Caco-2 (cell line): ENCODE measurements at regions of chr13 and their contacts with region 1.

Region 1: DNA sequence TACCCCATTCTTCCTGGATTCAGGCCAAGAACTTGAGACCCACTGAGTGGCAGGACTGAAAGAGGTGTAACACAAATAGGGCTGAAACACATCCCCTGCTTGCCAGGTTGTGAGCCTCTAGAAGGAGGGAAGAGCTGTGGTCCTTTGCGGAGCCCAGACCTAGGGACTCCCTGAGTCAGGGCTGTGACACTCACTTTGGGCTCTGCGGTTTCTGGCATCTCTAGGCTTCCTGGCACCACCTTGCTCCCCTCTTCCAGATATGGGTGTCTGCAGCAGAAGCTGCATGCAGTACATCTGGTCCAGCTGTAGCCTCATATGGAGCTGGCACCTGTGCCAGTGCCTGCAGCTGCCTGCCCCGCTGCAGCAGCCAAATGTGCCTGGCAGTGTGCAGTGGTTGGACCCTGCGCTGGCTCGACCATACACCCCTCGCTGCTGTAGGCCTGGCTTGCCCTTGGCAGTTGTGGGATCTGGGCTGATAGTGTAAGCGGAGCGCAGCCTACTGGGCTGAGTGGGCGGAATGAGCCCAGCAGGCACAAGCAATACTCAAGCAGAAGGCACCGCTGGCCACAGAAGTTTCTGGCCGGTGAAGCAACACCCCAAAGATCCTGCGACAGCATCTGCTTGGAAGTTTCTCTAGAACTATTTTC is 290.4 kb downstream of the SLITRK6 start:
- DNase-seq: peak in 1 of 2 experiments; percentile 22
- H3K4me3 ChIP-seq: no peak overlapping the region
- H3K4me3 Mint-ChIP-seq: no peak overlapping the region
- H3K27ac Mint-ChIP-seq: peak overlapping the region; percentile 66
- H3K4me1 ChIP-seq: peaks cover 50% of the 10 kb centered on the region
- H3K4me1 Mint-ChIP-seq: peaks cover 31% of the 10 kb centered on the region
- H3K27me3 ChIP-seq: no peaks in the 10 kb centered on the region
- H3K27me3 Mint-ChIP-seq: no peaks in the 10 kb centered on the region
- CTCF ChIP-seq: no peak

Region 2: DNA sequence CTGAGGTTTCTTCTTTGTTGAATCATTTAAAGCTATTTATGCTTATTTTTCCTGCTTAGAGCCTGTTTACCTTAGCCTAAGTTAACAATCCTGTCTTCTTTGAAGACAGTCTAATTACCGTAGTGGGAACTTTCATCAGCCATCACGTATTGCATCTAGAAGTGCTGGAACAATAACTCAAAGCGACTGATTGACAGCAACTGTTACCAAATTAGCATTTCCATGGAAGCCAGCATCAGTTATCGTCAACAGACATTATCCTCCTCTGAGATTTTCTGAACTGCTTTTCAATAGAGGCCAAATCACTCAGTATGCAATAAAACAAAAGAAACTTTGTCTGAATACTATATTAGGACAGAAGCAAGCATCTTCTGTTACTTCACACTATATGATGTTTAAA is 1193.3 kb before region 1 on chr13:
- CTCF ChIA-PET with region 1: no interaction called
- POLR2A ChIA-PET with region 1: no interaction called
- intact Hi-C with region 1: no loop called
- DNase-seq: no peak
- H3K4me3 ChIP-seq: no peak overlapping the region
- H3K4me3 Mint-ChIP-seq: no peak overlapping the region
- H3K27ac Mint-ChIP-seq: no peak overlapping the region
- H3K4me1 ChIP-seq: no peaks in the 10 kb centered on the region
- H3K4me1 Mint-ChIP-seq: no peaks in the 10 kb centered on the region
- H3K27me3 ChIP-seq: no peaks in the 10 kb centered on the region
- H3K27me3 Mint-ChIP-seq: no peaks in the 10 kb centered on the region
- CTCF ChIP-seq: no peak

Region 3: GRCh38 chr13:84917252-84917878 is 591.4 kb before region 1 on chr13:
- CTCF ChIA-PET with region 1: no interaction called
- POLR2A ChIA-PET with region 1: no interaction called
- intact Hi-C with region 1: loop called (anchors 5 kb)
- DNase-seq: no peak
- H3K4me3 ChIP-seq: no peak overlapping the region
- H3K4me3 Mint-ChIP-seq: no peak overlapping the region
- H3K27ac Mint-ChIP-seq: no peak overlapping the region
- H3K4me1 ChIP-seq: no peaks in the 10 kb centered on the region
- H3K4me1 Mint-ChIP-seq: no peaks in the 10 kb centered on the region
- H3K27me3 ChIP-seq: no peaks in the 10 kb centered on the region
- H3K27me3 Mint-ChIP-seq: no peaks in the 10 kb centered on the region
- CTCF ChIP-seq: peak; percentile 20 to 42

Region 4: GRCh38 chr13:85080691-85081090 is 428.1 kb before region 1 on chr13:
- CTCF ChIA-PET with region 1: no interaction called
- POLR2A ChIA-PET with region 1: no interaction called
- intact Hi-C with region 1: loop called (anchors 2 kb)
- DNase-seq: peak; percentile 39 to 68
- H3K4me3 ChIP-seq: no peak overlapping the region
- H3K4me3 Mint-ChIP-seq: peak overlapping the region; percentile 32
- H3K27ac Mint-ChIP-seq: peak overlapping the region; percentile 63
- H3K4me1 ChIP-seq: peaks cover 32% of the 10 kb centered on the region
- H3K4me1 Mint-ChIP-seq: peaks cover 13% of the 10 kb centered on the region
- H3K27me3 ChIP-seq: no peaks in the 10 kb centered on the region
- H3K27me3 Mint-ChIP-seq: no peaks in the 10 kb centered on the region
- CTCF ChIP-seq: no peak

Region 5: GRCh38 chr13:85230691-85231093 is 278.1 kb before region 1 on chr13:
- CTCF ChIA-PET with region 1: no interaction called
- POLR2A ChIA-PET with region 1: no interaction called
- intact Hi-C with region 1: loop called (anchors 5 kb)
- DNase-seq: peak in 1 of 2 experiments; percentile 13
- H3K4me3 ChIP-seq: no peak overlapping the region
- H3K4me3 Mint-ChIP-seq: no peak overlapping the region
- H3K27ac Mint-ChIP-seq: no peak overlapping the region
- H3K4me1 ChIP-seq: peaks cover 29% of the 10 kb centered on the region
- H3K4me1 Mint-ChIP-seq: peaks cover 7% of the 10 kb centered on the region
- H3K27me3 ChIP-seq: no peaks in the 10 kb centered on the region
- H3K27me3 Mint-ChIP-seq: no peaks in the 10 kb centered on the region
- CTCF ChIP-seq: no peak

Region 6: GRCh38 chr13:85277748-85278147 is 231.1 kb before region 1 on chr13:
- CTCF ChIA-PET with region 1: no interaction called
- POLR2A ChIA-PET with region 1: no interaction called
- intact Hi-C with region 1: loop called (anchors 1 kb)
- DNase-seq: no peak
- H3K4me3 ChIP-seq: no peak overlapping the region
- H3K4me3 Mint-ChIP-seq: peak overlapping the region; percentile 48
- H3K27ac Mint-ChIP-seq: peak overlapping the region; percentile 85
- H3K4me1 ChIP-seq: peaks cover 26% of the 10 kb centered on the region
- H3K4me1 Mint-ChIP-seq: peaks cover 16% of the 10 kb centered on the region
- H3K27me3 ChIP-seq: no peaks in the 10 kb centered on the region
- H3K27me3 Mint-ChIP-seq: no peaks in the 10 kb centered on the region
- CTCF ChIP-seq: no peak

Region 7: GRCh38 chr13:85283408-85283807 is 225.4 kb before region 1 on chr13:
- CTCF ChIA-PET with region 1: no interaction called
- POLR2A ChIA-PET with region 1: no interaction called
- intact Hi-C with region 1: loop called (anchors 2 kb)
- DNase-seq: peak in 1 of 2 experiments; percentile 42
- H3K4me3 ChIP-seq: no peak overlapping the region
- H3K4me3 Mint-ChIP-seq: peak overlapping the region; percentile 15
- H3K27ac Mint-ChIP-seq: peak overlapping the region; percentile 83
- H3K4me1 ChIP-seq: peaks cover 31% of the 10 kb centered on the region
- H3K4me1 Mint-ChIP-seq: peaks cover 15% of the 10 kb centered on the region
- H3K27me3 ChIP-seq: no peaks in the 10 kb centered on the region
- H3K27me3 Mint-ChIP-seq: no peaks in the 10 kb centered on the region
- CTCF ChIP-seq: no peak

Region 8: DNA sequence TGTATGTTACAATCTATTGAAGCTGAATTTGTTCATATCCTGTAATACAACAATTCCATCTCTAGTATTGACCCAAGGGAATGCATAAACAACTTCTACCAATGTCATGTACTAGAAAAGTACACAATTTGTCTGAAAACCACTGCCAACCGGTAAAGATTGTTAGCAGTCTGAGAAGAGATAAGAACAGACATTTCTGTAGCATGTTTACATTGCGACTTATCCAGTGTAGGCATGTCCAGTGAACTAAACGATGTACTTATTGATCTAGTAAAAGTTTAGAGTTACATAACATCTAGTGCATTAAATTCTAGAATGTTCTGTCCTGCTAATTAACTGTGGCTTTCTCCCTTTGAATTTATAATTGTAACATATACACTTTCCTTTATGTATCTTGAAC is 135.5 kb before region 1 on chr13:
- CTCF ChIA-PET with region 1: no interaction called
- POLR2A ChIA-PET with region 1: no interaction called
- intact Hi-C with region 1: loop called (anchors 5 kb)
- DNase-seq: no peak
- H3K4me3 ChIP-seq: no peak overlapping the region
- H3K4me3 Mint-ChIP-seq: no peak overlapping the region
- H3K27ac Mint-ChIP-seq: no peak overlapping the region
- H3K4me1 ChIP-seq: peaks cover 24% of the 10 kb centered on the region
- H3K4me1 Mint-ChIP-seq: peaks cover 12% of the 10 kb centered on the region
- H3K27me3 ChIP-seq: no peaks in the 10 kb centered on the region
- H3K27me3 Mint-ChIP-seq: no peaks in the 10 kb centered on the region
- CTCF ChIP-seq: no peak